Activated CD4-positive, alpha-beta T cell treated with anti-CD3 and anti-CD28 coated beads for 36 hours (primary cell): ENCODE measurements at regions of chr6 and their contacts with region 1.

Region 1: DNA sequence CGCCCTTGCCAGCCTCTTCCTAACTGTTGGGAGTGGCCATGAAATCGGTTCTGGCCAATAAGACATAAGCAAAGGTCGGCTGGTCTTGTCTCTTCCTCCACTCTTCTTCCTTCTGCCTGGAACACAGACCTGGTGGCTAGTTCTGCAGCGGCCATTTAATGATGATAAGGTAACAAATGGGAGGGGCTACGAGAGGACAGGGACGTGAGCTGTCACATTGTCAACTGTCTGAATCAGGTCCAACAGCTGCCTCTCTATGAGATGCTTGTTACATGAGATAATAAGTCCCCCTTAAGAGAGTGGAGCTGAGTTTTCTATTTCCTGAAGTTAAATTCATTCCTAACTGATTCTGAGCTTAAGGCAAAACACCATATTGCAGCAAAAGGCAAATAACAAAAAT is 12.5 kb upstream of the TMEM242 start:
- DNase-seq: no peak
- ATAC-seq: no peak
- H3K4me3 Mint-ChIP-seq: no peak overlapping the region
- H3K27ac Mint-ChIP-seq: no peak overlapping the region
- H3K4me1 Mint-ChIP-seq: no peaks in the 10 kb centered on the region
- H3K27me3 Mint-ChIP-seq: peaks cover 28% of the 10 kb centered on the region

Region 2: DNA sequence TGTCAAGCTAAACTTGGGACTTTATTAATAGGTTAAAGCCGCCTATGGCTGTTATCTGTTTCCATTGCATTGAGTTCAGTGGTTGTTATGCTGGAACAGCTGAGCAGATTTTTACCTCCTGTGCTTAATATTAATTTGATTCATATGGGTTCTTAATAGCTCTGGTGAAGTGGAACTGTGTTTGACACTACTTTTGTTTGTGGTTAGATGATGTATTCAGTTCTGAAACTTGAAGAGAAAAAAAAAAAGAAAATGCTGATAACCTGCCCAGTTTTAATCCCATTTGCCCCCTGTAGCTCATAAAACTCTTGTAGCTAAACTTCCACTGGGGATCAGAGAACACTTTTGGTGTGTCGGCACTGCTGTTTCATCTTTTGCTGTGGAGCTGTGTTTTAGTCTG is 163.0 kb after region 1 on chr6:
- CTCF ChIA-PET with region 1: no interaction called
- POLR2A ChIA-PET with region 1: interaction called, 10 read pairs
- intact Hi-C with region 1: no loop called
- DNase-seq: no peak
- ATAC-seq: peak; percentile 66
- H3K4me3 Mint-ChIP-seq: no peak overlapping the region
- H3K27ac Mint-ChIP-seq: no peak overlapping the region
- H3K4me1 Mint-ChIP-seq: peaks cover 23% of the 10 kb centered on the region
- H3K27me3 Mint-ChIP-seq: no peaks in the 10 kb centered on the region